Breast epithelium (tissue), 4 donors: ENCODE measurements at regions of chr18 and their contacts with region 1.

Region 1: DNA sequence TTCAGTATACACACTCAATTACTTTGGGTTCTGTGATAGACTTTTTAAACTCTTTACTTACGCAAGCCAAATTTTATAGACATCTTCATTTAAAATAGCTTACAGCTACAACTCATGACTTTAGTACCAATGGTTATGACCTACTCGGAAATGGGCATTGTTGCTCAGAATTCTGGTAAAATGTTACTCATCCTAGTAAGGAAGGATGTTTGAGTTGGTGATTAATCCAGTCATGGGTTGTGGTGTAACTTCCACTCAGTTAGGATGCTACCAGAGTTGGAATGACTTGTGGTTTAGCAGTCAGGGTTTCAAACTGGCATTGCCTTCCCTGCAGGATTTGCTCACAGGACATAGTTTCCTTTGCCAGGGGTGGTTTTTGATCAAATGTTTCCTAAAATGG is 7.4 kb upstream of the NPC1 start:
- DNase-seq: no peak
- H3K4me3 ChIP-seq: no peak overlapping the region
- H3K27ac ChIP-seq: no peak overlapping the region
- H3K4me1 ChIP-seq: no peaks in the 10 kb centered on the region
- H3K27me3 ChIP-seq: no peaks in the 10 kb centered on the region
- CTCF ChIP-seq: no peak
- POLR2A ChIP-seq: no peak

Region 2: DNA sequence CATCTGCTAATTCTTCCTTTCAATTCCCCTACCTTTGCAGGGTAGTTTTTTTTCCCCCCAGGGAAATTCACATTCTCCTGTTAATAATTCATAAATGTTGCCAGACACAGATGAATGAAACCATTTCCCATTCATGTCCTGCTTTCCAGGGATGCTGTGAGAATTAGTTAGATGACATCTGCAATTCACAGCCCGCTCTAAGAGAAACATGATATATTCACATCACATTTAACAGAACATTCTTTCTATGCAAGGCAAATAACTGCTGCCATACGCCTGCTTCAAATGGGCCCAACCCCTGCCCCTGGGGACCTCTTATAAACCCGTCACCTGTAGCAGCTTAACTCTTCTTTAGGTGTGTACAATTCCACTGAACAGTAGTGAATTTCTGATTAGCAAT is 1065.4 kb before region 1 on chr18:
- intact Hi-C with region 1: no loop called
- DNase-seq: no peak
- H3K4me3 ChIP-seq: no peak overlapping the region
- H3K27ac ChIP-seq: no peak overlapping the region
- H3K4me1 ChIP-seq: no peaks in the 10 kb centered on the region
- H3K27me3 ChIP-seq: no peaks in the 10 kb centered on the region
- CTCF ChIP-seq: no peak
- POLR2A ChIP-seq: no peak

Region 3: DNA sequence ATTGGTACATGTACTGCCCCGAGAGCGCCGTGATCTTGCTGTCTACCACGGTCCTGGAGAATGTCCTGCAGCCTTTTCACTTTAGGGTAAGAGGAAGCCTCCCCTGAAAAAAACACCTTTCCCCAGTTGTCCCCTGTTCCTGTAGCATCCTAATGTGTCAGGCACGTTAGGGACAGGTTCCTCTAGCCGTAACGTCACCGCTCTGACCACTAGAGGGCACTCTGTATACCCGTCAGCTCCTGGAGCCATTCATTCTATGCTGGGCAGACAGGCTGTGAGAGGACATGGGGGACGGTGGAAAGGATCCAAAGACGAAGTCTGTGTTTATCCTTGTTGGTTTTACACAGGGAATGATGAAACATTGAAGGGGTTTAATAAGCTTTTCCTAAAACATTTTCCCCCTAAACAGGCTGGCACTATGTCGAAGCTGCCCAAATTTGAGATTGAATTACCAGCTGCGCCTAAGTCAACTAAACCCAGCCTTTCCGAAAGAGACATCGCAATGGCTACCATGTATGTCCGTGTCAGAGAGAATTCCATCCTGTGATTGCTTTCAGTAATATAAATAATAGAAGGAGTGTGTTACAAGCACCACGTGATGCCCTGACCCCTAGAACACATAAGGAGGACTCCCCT is 77.7 kb before region 1 on chr18:
- intact Hi-C with region 1: loop called (anchors 10 kb)
- DNase-seq: peak; percentile 51 to 73
- H3K4me3 ChIP-seq: no peak overlapping the region
- H3K27ac ChIP-seq: peak overlapping the region in 1 of 2 donors; percentile 12
- H3K4me1 ChIP-seq: no peaks in the 10 kb centered on the region
- H3K27me3 ChIP-seq: no peaks in the 10 kb centered on the region
- CTCF ChIP-seq: peak; percentile 56 to 83 (median 75)
- POLR2A ChIP-seq: no peak

Region 4: DNA sequence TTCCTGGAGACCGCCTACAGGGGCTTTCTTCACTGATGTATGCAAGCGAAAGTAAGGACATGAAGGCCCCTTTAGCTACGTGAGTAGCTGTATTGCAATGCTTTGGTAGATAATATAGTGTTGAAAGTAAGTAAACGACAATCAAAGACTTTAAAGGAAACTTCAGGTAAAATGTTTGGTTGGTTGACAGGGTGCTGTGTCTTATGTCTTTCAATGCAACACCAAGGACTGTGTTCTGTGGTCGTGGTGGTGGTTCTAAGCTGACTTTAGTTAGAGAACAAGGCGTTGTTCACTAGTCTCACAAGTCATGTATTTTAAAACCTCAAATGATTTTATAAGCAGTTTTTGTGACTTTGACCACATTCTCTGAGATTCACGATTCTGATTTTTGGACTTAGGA is 487.1 kb after region 1 on chr18:
- intact Hi-C with region 1: loop called (anchors 5 kb)
- DNase-seq: no peak
- H3K4me3 ChIP-seq: no peak overlapping the region
- H3K27ac ChIP-seq: no peak overlapping the region
- H3K4me1 ChIP-seq: no peaks in the 10 kb centered on the region
- H3K27me3 ChIP-seq: no peaks in the 10 kb centered on the region
- CTCF ChIP-seq: no peak
- POLR2A ChIP-seq: no peak

Region 5: DNA sequence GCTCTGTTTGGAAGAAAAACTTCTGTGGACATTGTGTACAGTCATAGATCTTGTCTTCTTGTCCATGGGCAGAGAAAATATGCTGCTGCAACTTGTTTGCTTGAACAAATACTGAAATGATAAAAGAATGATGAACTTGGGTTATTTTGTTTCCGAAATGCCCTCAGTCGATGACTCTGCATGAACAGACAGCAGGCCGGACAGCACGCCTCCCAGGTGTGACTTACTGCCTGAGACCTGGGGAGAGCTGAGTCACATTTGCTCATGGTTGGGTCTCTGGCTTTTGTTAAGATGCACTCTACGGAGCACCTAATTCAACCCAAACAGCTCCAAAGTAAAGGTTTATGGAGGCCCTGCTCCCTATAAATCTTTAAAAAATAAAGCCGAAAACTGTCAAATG is 1495.8 kb after region 1 on chr18:
- intact Hi-C with region 1: no loop called
- DNase-seq: no peak
- H3K4me3 ChIP-seq: no peak overlapping the region
- H3K27ac ChIP-seq: no peak overlapping the region
- H3K4me1 ChIP-seq: no peaks in the 10 kb centered on the region
- H3K27me3 ChIP-seq: no peaks in the 10 kb centered on the region
- CTCF ChIP-seq: no peak
- POLR2A ChIP-seq: no peak